ENCODE measurements at regions of chr4 and their contacts with region 1.

Region 1: GRCh38 chr4:27000820-27001219 is 140.2 kb downstream of the STIM2 start:
- DNase-seq: peak in 4 of 14 experiments; percentile 10 to 57 (median 51)
- ATAC-seq: peak; percentile 87
- H3K4me3 ChIP-seq: no peak overlapping the region
- H3K4me3 Mint-ChIP-seq: no peak overlapping the region
- H3K27ac ChIP-seq: no peak overlapping the region
- H3K27ac Mint-ChIP-seq: peak overlapping the region; percentile 50
- H3K4me1 ChIP-seq: peaks cover 11% of the 10 kb centered on the region
- H3K4me1 Mint-ChIP-seq: peaks cover 51% of the 10 kb centered on the region
- H3K27me3 ChIP-seq: no peaks in the 10 kb centered on the region
- H3K27me3 Mint-ChIP-seq: no peaks in the 10 kb centered on the region
- CTCF ChIP-seq: peak; percentile 56

Region 2: DNA sequence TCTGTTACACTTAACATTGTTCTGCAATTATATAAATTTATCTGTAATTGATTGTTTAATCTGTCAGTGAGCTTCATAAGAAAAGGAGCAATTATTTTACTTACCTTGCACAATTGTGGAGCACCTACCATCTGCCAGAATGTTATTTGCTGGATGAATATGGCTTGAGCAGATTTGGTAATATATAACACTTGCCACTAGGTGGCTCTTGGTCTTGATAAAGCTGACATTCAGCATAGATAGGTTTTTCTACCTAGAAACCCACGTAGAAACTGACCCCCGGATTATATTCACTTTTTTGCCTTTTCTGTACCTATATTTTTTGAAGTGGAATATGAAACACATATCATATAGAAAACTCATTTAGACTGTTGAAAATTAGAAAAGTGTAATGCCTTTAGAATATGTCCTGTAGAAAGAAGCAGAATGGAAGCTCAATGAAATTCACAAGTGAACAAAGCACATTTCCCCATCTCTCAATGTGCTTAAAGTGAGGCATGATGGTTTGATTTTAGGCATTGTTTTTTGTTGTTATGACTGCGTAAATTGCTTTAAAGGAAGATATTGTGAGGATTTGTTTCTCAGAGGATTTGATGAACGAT is 670.5 kb before region 1 on chr4:
- CTCF ChIA-PET with region 1: no interaction called
- POLR2A ChIA-PET with region 1: no interaction called
- intact Hi-C with region 1: loop called in 1 of 2 experiments (anchors 5 kb)
- DNase-seq: peak in 4 of 14 experiments; percentile 26 to 73 (median 70)
- ATAC-seq: peak; percentile 82
- H3K4me3 ChIP-seq: no peak overlapping the region
- H3K4me3 Mint-ChIP-seq: no peak overlapping the region
- H3K27ac ChIP-seq: no peak overlapping the region
- H3K27ac Mint-ChIP-seq: no peak overlapping the region
- H3K4me1 ChIP-seq: peaks cover 4% of the 10 kb centered on the region
- H3K4me1 Mint-ChIP-seq: peaks cover 56% of the 10 kb centered on the region
- H3K27me3 ChIP-seq: no peaks in the 10 kb centered on the region
- H3K27me3 Mint-ChIP-seq: no peaks in the 10 kb centered on the region
- CTCF ChIP-seq: peak; percentile 84

Region 3: DNA sequence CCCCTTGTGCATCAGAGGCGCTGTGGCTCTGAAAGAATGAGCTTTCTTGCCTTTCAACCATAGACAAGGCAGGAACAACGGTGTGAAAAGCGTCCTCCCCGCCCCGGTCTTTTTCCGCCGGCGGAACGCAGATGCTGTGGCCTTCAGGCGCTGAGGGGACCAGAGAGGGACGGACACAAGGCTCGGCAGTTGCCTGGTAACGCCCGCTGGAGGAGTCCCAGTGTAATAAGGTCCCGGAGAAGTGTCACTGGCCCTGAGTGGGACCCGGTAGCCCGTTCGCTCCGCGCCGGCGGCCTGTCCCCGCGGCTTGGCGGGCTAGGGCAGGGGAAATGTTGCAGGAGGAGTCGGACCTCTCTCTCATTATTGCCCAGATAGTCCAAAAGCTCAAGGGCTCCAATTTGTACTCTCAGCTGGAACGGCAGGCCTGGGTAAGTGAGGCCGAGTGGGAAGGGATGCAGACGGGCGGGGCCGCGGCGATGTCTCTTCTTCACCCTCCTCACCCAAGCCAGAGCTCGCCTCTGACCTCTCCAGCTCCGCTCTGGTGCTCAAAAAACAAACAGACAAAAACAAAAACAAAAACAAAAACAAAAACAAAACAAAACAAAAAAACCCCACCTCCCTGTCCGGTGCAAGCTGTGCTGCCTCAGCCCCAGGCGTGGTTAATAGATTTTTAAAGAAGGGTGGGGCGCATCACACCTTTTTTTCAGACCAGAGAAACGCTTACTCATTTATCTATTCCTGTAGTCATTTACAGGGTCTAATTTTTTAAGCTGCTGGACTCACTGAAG is 416.8 kb before region 1 on chr4 and contains the start of gene TBC1D19:
- CTCF ChIA-PET with region 1: no interaction called
- POLR2A ChIA-PET with region 1: interaction called, 3 read pairs
- intact Hi-C with region 1: loop called (anchors 5 kb)
- DNase-seq: peak; percentile 78 to 93 (median 86)
- ATAC-seq: peak; percentile 87
- H3K4me3 ChIP-seq: peak within 1 kb of the TSS; percentile 76
- H3K4me3 Mint-ChIP-seq: peak within 1 kb of the TSS; percentile 96
- H3K27ac ChIP-seq: peak within 1 kb of the TSS; percentile 81 to 85
- H3K27ac Mint-ChIP-seq: peak within 1 kb of the TSS; percentile 95
- H3K4me1 ChIP-seq: peaks cover 11% of the 10 kb centered on the region
- H3K4me1 Mint-ChIP-seq: peaks cover 28% of the 10 kb centered on the region
- H3K27me3 ChIP-seq: no peaks in the 10 kb centered on the region
- H3K27me3 Mint-ChIP-seq: peaks cover 3% of the 10 kb centered on the region
- CTCF ChIP-seq: no peak
- total RNA-seq, gene TBC1D19: 4.0 to 4.8 TPM

Region 4: DNA sequence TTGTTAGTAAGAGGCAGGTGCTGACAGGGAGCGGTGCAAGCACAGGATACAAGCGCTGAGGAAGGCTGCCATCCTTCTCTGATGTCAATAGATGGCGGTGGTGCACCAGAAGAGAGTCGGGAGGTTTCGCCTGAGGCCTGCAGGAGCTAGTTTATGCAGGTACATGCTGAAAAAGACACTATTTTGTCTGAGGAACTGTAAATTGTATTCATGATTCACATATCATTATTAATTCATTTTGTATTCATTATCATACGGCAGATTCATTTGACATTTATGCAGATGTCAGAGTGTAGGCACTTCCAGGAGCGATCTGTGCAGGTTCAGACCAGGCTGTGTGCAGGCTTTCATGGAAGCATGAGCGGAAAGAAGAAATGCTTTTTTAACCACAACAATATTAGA is 683.8 kb after region 1 on chr4:
- CTCF ChIA-PET with region 1: no interaction called
- POLR2A ChIA-PET with region 1: no interaction called
- intact Hi-C with region 1: no loop called
- DNase-seq: no peak
- ATAC-seq: no peak
- H3K4me3 ChIP-seq: no peak overlapping the region
- H3K4me3 Mint-ChIP-seq: no peak overlapping the region
- H3K27ac ChIP-seq: no peak overlapping the region
- H3K27ac Mint-ChIP-seq: no peak overlapping the region
- H3K4me1 ChIP-seq: no peaks in the 10 kb centered on the region
- H3K4me1 Mint-ChIP-seq: no peaks in the 10 kb centered on the region
- H3K27me3 ChIP-seq: no peaks in the 10 kb centered on the region
- H3K27me3 Mint-ChIP-seq: no peaks in the 10 kb centered on the region
- CTCF ChIP-seq: no peak

Measured in CD4-positive, alpha-beta T cell (primary cell).